CD8-positive, alpha-beta memory T cell (primary cell): ENCODE measurements at regions of chr20 and their contacts with region 1.

Region 1: GRCh38 chr20:13119583-13119982 is 101.5 kb upstream of the ISM1 start:
- DNase-seq: peak in 3 of 5 donors; percentile 43 to 58 (median 45)
- H3K4me3 ChIP-seq: no peak overlapping the region
- H3K4me3 Mint-ChIP-seq: no peak overlapping the region
- H3K27ac ChIP-seq: no peak overlapping the region
- H3K27ac Mint-ChIP-seq: no peak overlapping the region
- H3K4me1 ChIP-seq: no peaks in the 10 kb centered on the region
- H3K4me1 Mint-ChIP-seq: no peaks in the 10 kb centered on the region
- H3K27me3 ChIP-seq: no peaks in the 10 kb centered on the region
- H3K27me3 Mint-ChIP-seq: peaks cover 0 to 5% of the 10 kb centered on the region in 2 donors

Region 2: DNA sequence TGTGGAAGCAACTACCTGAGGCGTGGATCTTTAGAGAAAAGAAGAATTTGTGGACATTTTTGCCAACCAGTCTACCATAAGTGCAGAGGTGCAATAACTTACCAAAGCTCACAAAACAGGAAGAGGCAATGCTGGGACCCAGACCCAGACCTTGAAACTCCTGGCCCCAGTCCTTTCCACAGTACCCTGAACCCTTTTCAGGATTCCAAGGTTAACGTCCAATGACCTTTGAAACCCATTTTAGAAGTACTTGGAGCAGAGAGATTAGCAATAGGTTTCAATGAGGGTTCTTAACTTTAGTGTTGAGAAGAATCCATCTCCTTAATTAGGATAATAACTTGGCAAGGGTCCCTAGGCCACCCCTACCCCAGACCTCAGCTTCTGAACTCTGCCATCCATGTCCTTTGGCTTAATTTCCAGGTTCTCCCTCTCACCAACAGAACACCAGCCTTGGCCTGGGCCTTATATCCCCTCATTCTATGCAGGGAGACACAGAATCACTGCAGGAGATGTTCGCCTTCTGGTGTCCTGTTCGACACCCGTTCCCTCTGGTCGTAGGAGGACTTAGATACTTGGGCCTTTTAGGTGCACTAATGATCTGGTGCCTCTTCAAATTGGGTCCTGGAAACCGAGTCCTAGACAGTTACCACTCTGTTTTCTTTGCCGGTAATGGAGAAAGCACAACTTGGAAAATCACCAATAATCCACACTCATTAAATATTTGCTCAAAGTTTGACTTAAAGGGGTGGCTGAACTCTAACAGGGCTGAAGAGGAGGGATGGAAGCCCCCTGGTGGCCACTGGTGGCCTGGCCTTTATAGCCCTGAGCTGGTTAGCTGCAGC is 142.1 kb after region 1 on chr20:
- CTCF ChIA-PET with region 1: interaction called, 35 read pairs
- POLR2A ChIA-PET with region 1: no interaction called
- DNase-seq: peak; percentile 20 to 67 (median 41)
- H3K4me3 ChIP-seq: no peak overlapping the region
- H3K4me3 Mint-ChIP-seq: no peak overlapping the region
- H3K27ac ChIP-seq: no peak overlapping the region
- H3K27ac Mint-ChIP-seq: no peak overlapping the region
- H3K4me1 ChIP-seq: no peaks in the 10 kb centered on the region
- H3K4me1 Mint-ChIP-seq: peaks cover 2 to 5% (median 4%) of the 10 kb centered on the region in 3 donors
- H3K27me3 ChIP-seq: no peaks in the 10 kb centered on the region
- H3K27me3 Mint-ChIP-seq: no peaks in the 10 kb centered on the region

Region 3: GRCh38 chr20:13546497-13547131 is 427.0 kb after region 1 on chr20:
- CTCF ChIA-PET with region 1: interaction called, 11 read pairs
- POLR2A ChIA-PET with region 1: no interaction called
- DNase-seq: peak; percentile 21 to 65 (median 36)
- H3K4me3 ChIP-seq: no peak overlapping the region
- H3K4me3 Mint-ChIP-seq: no peak overlapping the region
- H3K27ac ChIP-seq: no peak overlapping the region
- H3K27ac Mint-ChIP-seq: peak overlapping the region in 1 of 8 donors; percentile 61
- H3K4me1 ChIP-seq: no peaks in the 10 kb centered on the region
- H3K4me1 Mint-ChIP-seq: peaks cover 0 to 3% (median 0%) of the 10 kb centered on the region in 3 donors
- H3K27me3 ChIP-seq: no peaks in the 10 kb centered on the region
- H3K27me3 Mint-ChIP-seq: no peaks in the 10 kb centered on the region